Left colon (tissue), 2 donors: ENCODE measurements at regions of chr5 and their contacts with region 1.

Region 1: GRCh38 chr5:136769900-136770684 is 404.7 kb upstream of the TRPC7 start:
- DNase-seq: peak in 1 of 2 donors; percentile 47
- ATAC-seq: peak; percentile 68

Region 2: GRCh38 chr5:136249678-136250266 is 520.3 kb before region 1 on chr5:
- intact Hi-C with region 1: loop called in 1 of 2 experiments (anchors 5 kb)
- DNase-seq: peak in 1 of 2 donors; percentile 61
- ATAC-seq: peak; percentile 84

Region 3: GRCh38 chr5:136594416-136594815 is 175.7 kb before region 1 on chr5:
- intact Hi-C with region 1: no loop called
- DNase-seq: no peak
- ATAC-seq: no peak

Region 4: GRCh38 chr5:137867664-137868063 is 1097.6 kb after region 1 on chr5 and contains the start of gene MYOT:
- intact Hi-C with region 1: no loop called
- DNase-seq: no peak
- ATAC-seq: no peak
- total RNA-seq, gene MYOT: 2.9 to 3.2 TPM